ENCODE measurements at regions of chr14 and their contacts with region 1.

Region 1: DNA sequence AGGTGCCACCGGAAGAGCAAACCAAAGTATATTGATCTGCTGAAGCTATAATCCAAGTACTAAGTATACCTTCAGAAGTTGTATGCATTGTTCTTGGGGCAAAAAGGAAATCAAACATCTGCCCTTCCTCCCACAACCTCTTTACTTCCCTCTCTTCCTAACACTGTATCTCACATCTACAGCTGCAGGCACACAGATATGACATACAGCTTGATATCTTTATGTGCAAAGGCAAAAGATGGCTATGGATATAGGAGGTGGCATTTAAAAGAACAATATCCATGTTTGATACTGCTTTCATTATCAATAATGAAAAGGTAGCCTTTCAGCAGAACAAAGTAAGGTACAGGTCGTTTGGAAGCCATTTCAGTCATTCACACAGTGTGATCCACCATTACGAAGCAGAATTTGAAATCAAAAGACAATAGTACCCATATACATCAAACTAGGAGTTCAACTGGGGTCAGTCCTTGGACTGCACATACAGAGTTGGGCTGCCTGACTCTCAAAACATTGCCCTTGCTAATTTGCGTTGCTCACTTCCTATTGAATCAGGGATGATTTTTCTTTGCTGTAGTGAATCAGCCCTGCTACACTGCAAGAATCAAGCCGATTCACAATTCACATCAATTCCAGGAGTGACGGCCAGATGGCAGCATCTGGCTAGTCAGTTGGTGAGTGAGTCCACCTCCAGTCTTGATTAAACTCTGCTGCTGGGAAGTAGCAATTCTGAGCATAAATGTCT is 8.9 kb downstream of the ANG start:
- DNase-seq: peak; percentile 44
- H3K4me3 Mint-ChIP-seq: no peak overlapping the region
- H3K27ac Mint-ChIP-seq: no peak overlapping the region
- H3K4me1 Mint-ChIP-seq: peaks cover 15% of the 10 kb centered on the region
- H3K27me3 Mint-ChIP-seq: peaks cover 2% of the 10 kb centered on the region

Region 2: GRCh38 chr14:20195911-20196310 is 501.5 kb before region 1 on chr14:
- intact Hi-C with region 1: no loop called
- DNase-seq: no peak
- H3K4me3 Mint-ChIP-seq: no peak overlapping the region
- H3K27ac Mint-ChIP-seq: no peak overlapping the region
- H3K4me1 Mint-ChIP-seq: no peaks in the 10 kb centered on the region
- H3K27me3 Mint-ChIP-seq: peaks cover 2% of the 10 kb centered on the region

Region 3: GRCh38 chr14:20317720-20318119 is 379.7 kb before region 1 on chr14:
- intact Hi-C with region 1: no loop called
- DNase-seq: no peak
- H3K4me3 Mint-ChIP-seq: no peak overlapping the region
- H3K27ac Mint-ChIP-seq: no peak overlapping the region
- H3K4me1 Mint-ChIP-seq: no peaks in the 10 kb centered on the region
- H3K27me3 Mint-ChIP-seq: no peaks in the 10 kb centered on the region

Region 4: GRCh38 chr14:20873370-20874177 is 176.1 kb after region 1 on chr14:
- intact Hi-C with region 1: loop called (anchors 1 kb)
- DNase-seq: peak; percentile 65
- H3K4me3 Mint-ChIP-seq: no peak overlapping the region
- H3K27ac Mint-ChIP-seq: no peak overlapping the region
- H3K4me1 Mint-ChIP-seq: peaks cover 10% of the 10 kb centered on the region
- H3K27me3 Mint-ChIP-seq: peaks cover 21% of the 10 kb centered on the region